OCI-LY7 (cell line): ENCODE measurements at regions of chr1 and their contacts with region 1.

Region 1: GRCh38 chr1:107782217-107782845 is 182.6 kb downstream of the VAV3 start:
- DNase-seq: peak; percentile 75
- H3K4me3 ChIP-seq: no peak overlapping the region
- H3K27ac ChIP-seq: no peak overlapping the region
- H3K4me1 ChIP-seq: peaks cover 36% of the 10 kb centered on the region
- CTCF ChIP-seq: peak; percentile 98

Region 2: GRCh38 chr1:107795994-107796393 is 13.7 kb after region 1 on chr1:
- CTCF ChIA-PET with region 1: interaction called, 3 read pairs
- POLR2A ChIA-PET with region 1: interaction called, 17 read pairs
- intact Hi-C with region 1: no loop called
- DNase-seq: peak; percentile 42
- H3K4me3 ChIP-seq: peak overlapping the region; percentile 39
- H3K27ac ChIP-seq: peak overlapping the region; percentile 68
- H3K4me1 ChIP-seq: peaks cover 55% of the 10 kb centered on the region
- CTCF ChIP-seq: no peak

Region 3: GRCh38 chr1:107840725-107841124 is 58.4 kb after region 1 on chr1:
- CTCF ChIA-PET with region 1: no interaction called
- POLR2A ChIA-PET with region 1: interaction called, 3 read pairs
- intact Hi-C with region 1: loop called (anchors 5 kb)
- DNase-seq: peak; percentile 41
- H3K4me3 ChIP-seq: no peak overlapping the region
- H3K27ac ChIP-seq: no peak overlapping the region
- H3K4me1 ChIP-seq: peaks cover 49% of the 10 kb centered on the region
- CTCF ChIP-seq: no peak

Region 4: DNA sequence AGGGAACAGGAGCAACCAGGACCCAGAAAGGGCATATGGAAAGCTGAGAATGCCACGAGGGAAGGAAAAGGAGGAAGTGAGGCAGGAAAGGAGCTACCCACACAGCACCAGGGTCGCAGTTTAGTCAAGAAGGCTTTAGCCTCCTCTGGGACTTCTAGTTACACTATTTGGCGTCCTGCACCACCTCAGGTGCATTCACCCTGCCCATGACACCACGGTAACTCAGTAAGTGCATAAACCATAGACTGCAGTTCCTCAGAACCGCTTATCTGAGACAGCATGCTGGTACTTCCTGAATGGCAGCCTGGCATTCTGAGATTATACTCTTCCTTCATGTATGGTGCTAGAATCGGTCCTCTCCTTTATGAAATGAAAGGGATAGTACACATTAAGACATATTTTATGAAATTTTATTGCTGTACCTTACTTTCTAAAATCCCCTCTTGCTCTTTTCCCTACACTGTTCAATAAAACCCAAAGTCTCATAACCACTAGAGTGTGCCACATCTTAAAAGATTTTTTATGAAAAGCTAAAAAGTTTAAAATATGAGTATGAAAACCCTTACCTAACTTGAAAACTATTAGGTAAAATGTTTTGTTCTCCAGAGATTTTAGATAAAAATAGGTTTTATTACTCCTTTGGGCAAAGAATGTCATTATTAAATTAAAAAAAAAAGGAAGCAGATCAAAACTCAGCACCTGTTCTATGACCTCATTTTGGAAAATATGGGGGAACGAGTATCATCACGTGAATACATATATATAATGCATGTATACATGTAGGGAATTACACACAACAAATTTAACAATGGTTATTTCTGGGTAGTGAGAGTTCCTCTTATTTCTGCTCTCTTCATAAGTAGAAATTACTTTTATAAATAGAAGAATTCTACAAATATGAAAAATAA is 115.4 kb after region 1 on chr1:
- CTCF ChIA-PET with region 1: no interaction called
- POLR2A ChIA-PET with region 1: interaction called, 4 read pairs
- intact Hi-C with region 1: loop called (anchors 2 kb)
- DNase-seq: peak; percentile 84
- H3K4me3 ChIP-seq: peak overlapping the region; percentile 39
- H3K27ac ChIP-seq: peak overlapping the region; percentile 89
- H3K4me1 ChIP-seq: peaks cover 74% of the 10 kb centered on the region
- CTCF ChIP-seq: peak; percentile 71

Region 5: GRCh38 chr1:108075055-108075454 is 292.7 kb after region 1 on chr1:
- CTCF ChIA-PET with region 1: no interaction called
- POLR2A ChIA-PET with region 1: no interaction called
- intact Hi-C with region 1: loop called (anchors 5 kb)
- DNase-seq: peak; percentile 68
- H3K4me3 ChIP-seq: peak overlapping the region; percentile 17
- H3K27ac ChIP-seq: peak overlapping the region; percentile 49
- H3K4me1 ChIP-seq: peaks cover 45% of the 10 kb centered on the region
- CTCF ChIP-seq: no peak